ENCODE measurements at regions of chr10 and their contacts with region 1.

Region 1: GRCh38 chr10:59872892-59873463 is 33.4 kb downstream of the CCDC6 start:
- DNase-seq: peak; percentile 95
- H3K4me3 ChIP-seq: peak overlapping the region; percentile 42
- H3K27ac ChIP-seq: peak overlapping the region; percentile 93
- H3K27me3 ChIP-seq: no peaks in the 10 kb centered on the region
- CTCF ChIP-seq: no peak

Region 2: DNA sequence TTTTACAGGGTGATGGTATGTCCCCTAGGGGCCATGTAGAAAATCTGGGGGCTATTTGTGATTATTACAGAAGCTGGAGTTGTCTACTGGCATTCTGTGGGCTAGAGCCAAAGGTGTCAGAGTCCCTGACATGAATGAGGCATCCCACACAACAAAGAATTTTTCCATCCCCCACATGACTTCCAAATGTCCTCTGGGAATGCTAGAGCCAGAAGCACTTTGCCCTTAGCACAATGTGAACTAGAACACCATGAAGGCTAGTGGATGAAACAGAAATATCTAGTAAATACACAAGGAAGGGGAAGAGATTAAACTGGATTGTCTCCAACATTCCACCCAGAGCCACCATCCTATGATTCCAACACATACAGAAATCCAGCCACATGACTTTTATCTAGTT is 557.5 kb before region 1 on chr10:
- CTCF ChIA-PET with region 1: no interaction called
- POLR2A ChIA-PET with region 1: no interaction called
- DNase-seq: no peak
- H3K4me3 ChIP-seq: no peak overlapping the region
- H3K27ac ChIP-seq: no peak overlapping the region
- H3K27me3 ChIP-seq: no peaks in the 10 kb centered on the region
- CTCF ChIP-seq: no peak

Region 3: GRCh38 chr10:59857921-59858320 is 15.1 kb before region 1 on chr10:
- CTCF ChIA-PET with region 1: interaction called, 10 read pairs
- POLR2A ChIA-PET with region 1: no interaction called
- DNase-seq: no peak
- H3K4me3 ChIP-seq: no peak overlapping the region
- H3K27ac ChIP-seq: no peak overlapping the region
- H3K27me3 ChIP-seq: no peaks in the 10 kb centered on the region
- CTCF ChIP-seq: no peak

Region 4: GRCh38 chr10:59906417-59907202 is 33.6 kb after region 1 on chr10 and contains the start of gene CCDC6:
- CTCF ChIA-PET with region 1: interaction called, 29 read pairs
- POLR2A ChIA-PET with region 1: interaction called, 16 read pairs
- DNase-seq: peak; percentile 81
- H3K4me3 ChIP-seq: peak within 1 kb of the TSS; percentile 92
- H3K27ac ChIP-seq: peak within 1 kb of the TSS; percentile 88
- H3K27me3 ChIP-seq: no peaks in the 10 kb centered on the region
- CTCF ChIP-seq: peak; percentile 72
- polyA plus RNA-seq, gene CCDC6: 42.2 and 51.1 TPM in 2 replicates